ENCODE measurements at regions of chr15 and their contacts with region 1.

Region 1: DNA sequence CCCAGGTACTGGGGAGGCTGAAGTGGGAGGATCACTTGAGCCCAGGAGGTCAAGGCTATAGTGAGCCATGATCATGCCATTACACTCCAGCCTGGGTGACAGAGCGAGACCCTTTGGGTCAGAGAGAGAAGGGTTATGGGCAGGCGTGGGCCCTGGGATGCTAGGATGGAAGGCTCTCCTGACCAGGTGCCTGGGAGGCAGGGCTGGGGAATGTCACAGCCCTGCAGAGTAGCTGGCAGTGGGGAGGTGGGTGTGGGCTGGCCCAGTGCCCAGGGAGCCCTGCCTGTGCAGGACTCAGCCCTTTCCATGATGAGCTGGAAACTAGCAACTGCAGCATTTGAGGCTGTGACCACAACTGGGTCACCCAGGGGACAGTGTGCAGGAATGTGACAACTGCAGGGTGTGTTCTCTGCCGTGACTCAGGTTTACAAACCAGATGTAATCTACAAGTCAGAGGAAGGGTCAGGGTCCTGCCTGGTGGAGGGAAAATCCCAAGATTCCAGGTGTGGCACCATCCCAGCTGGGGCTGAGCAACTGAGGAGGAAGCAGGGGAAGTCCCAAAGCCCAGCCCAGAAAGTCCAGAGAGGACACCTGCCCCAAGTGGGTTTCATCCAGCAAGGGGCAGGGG is 45.4 kb downstream of the SLC28A1 start:
- DNase-seq: peak; percentile 99
- ATAC-seq: peak; percentile 88
- H3K4me3 ChIP-seq: no peak overlapping the region
- H3K27ac ChIP-seq: peak overlapping the region; percentile 87
- H3K4me1 ChIP-seq: peaks cover 42% of the 10 kb centered on the region
- H3K27me3 ChIP-seq: no peaks in the 10 kb centered on the region
- CTCF ChIP-seq: no peak

Region 2: GRCh38 chr15:84588053-84588874 is 341.6 kb before region 1 on chr15:
- CTCF ChIA-PET with region 1: no interaction called
- POLR2A ChIA-PET with region 1: no interaction called
- intact Hi-C with region 1: loop called (anchors 5 kb)
- DNase-seq: peak; percentile 91
- ATAC-seq: peak; percentile 100
- H3K4me3 ChIP-seq: peak overlapping the region; percentile 54
- H3K27ac ChIP-seq: no peak overlapping the region
- H3K4me1 ChIP-seq: no peaks in the 10 kb centered on the region; the same call in 1 of the 2 replicates
- H3K27me3 ChIP-seq: no peaks in the 10 kb centered on the region
- CTCF ChIP-seq: peak; percentile 61

Region 3: DNA sequence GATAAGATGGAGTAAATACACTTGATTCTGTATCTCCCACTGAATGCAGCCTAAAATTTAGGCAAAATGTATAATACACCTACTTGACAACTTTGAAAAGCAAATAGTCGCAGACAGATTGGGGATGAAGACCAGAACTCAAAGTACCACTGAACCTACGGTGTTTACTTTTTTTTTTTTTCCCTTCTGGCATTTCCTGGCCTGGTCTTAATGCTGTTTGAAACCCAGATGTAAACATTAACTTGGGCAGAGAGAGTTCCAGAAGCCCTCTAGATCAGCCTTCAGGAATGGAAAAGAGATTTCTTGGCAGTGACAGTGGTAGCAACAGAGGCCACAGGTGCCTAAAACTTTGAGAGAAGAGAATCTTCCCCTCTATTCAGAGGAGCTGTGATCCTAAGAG is 84.9 kb before region 1 on chr15:
- CTCF ChIA-PET with region 1: no interaction called
- POLR2A ChIA-PET with region 1: no interaction called
- intact Hi-C with region 1: loop called (anchors 1 kb)
- DNase-seq: no peak
- ATAC-seq: no peak
- H3K4me3 ChIP-seq: no peak overlapping the region
- H3K27ac ChIP-seq: no peak overlapping the region
- H3K4me1 ChIP-seq: peaks cover 17% of the 10 kb centered on the region
- H3K27me3 ChIP-seq: no peaks in the 10 kb centered on the region
- CTCF ChIP-seq: no peak